CD8-positive, alpha-beta T cell (primary cell): ENCODE measurements at regions of chr2 and their contacts with region 1.

Region 1: DNA sequence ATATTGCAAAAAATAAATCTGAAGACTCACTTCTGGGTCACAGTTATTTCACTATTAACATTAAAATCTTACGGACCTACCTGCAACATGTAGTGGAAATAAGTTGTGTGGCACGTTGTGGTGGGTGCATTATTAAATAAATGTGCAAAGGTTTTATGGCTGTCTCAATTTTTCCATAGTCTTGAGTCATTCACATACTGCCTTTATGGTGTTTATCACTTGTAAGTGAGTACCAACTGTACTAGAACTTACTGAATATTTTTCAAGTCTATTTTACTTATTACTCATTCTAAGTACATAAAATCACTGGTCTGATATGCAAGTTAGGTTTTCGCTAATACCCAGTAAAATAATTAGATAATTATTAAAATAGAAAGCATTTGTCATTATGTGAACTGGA is 47.6 kb upstream of the SLC30A6 start:
- DNase-seq: no peak
- ATAC-seq: no peak
- H3K4me3 ChIP-seq: no peak overlapping the region
- H3K4me3 Mint-ChIP-seq: no peak overlapping the region
- H3K27ac ChIP-seq: no peak overlapping the region
- H3K27ac Mint-ChIP-seq: no peak overlapping the region
- H3K4me1 ChIP-seq: no peaks in the 10 kb centered on the region
- H3K4me1 Mint-ChIP-seq: no peaks in the 10 kb centered on the region
- H3K27me3 ChIP-seq: no peaks in the 10 kb centered on the region
- H3K27me3 Mint-ChIP-seq: no peaks in the 10 kb centered on the region
- CTCF ChIP-seq: no peak

Region 2: GRCh38 chr2:31828891-31829290 is 289.2 kb before region 1 on chr2:
- CTCF ChIA-PET with region 1: no interaction called
- POLR2A ChIA-PET with region 1: no interaction called
- intact Hi-C with region 1: loop called in 1 of 2 experiments (anchors 5 kb)
- DNase-seq: no peak
- ATAC-seq: no peak
- H3K4me3 ChIP-seq: no peak overlapping the region
- H3K4me3 Mint-ChIP-seq: no peak overlapping the region
- H3K27ac ChIP-seq: no peak overlapping the region
- H3K27ac Mint-ChIP-seq: no peak overlapping the region
- H3K4me1 ChIP-seq: no peaks in the 10 kb centered on the region
- H3K4me1 Mint-ChIP-seq: no peaks in the 10 kb centered on the region
- H3K27me3 ChIP-seq: no peaks in the 10 kb centered on the region
- H3K27me3 Mint-ChIP-seq: peaks cover 7% of the 10 kb centered on the region
- CTCF ChIP-seq: no peak

Region 3: DNA sequence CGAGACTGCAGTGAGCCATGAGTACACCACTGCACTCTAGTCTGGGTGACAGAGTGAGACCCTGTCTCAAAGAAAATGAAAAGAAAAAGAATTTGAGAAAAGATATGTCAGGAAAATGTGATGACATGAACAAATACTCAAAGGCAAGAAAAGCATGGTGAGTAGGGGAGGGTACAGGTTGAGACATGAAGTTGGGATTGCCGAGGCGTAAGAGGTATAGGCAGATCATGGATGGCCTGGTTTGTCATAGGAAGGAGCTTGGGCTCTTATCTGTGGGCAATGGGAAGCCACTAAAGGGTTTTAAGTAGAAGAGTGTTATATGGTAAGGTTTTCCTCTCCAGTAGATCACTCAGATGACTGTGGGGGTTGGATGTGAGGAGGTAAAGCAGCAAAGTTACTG is 22.4 kb before region 1 on chr2:
- CTCF ChIA-PET with region 1: no interaction called
- POLR2A ChIA-PET with region 1: no interaction called
- intact Hi-C with region 1: no loop called
- DNase-seq: no peak
- ATAC-seq: no peak
- H3K4me3 ChIP-seq: no peak overlapping the region
- H3K4me3 Mint-ChIP-seq: no peak overlapping the region
- H3K27ac ChIP-seq: no peak overlapping the region
- H3K27ac Mint-ChIP-seq: peak overlapping the region; percentile 2
- H3K4me1 ChIP-seq: no peaks in the 10 kb centered on the region
- H3K4me1 Mint-ChIP-seq: peaks cover 3% of the 10 kb centered on the region
- H3K27me3 ChIP-seq: no peaks in the 10 kb centered on the region
- H3K27me3 Mint-ChIP-seq: no peaks in the 10 kb centered on the region
- CTCF ChIP-seq: no peak